ENCODE measurements at regions of chr5 and their contacts with region 1.

Region 1: GRCh38 chr5:128674825-128675446 is 136.9 kb upstream of the FBN2 start:
- DNase-seq: peak; percentile 67
- ATAC-seq: peak; percentile 58
- H3K4me3 Mint-ChIP-seq: no peak overlapping the region
- H3K27ac Mint-ChIP-seq: no peak overlapping the region
- H3K4me1 Mint-ChIP-seq: no peaks in the 10 kb centered on the region
- H3K27me3 Mint-ChIP-seq: peaks cover 9% of the 10 kb centered on the region

Region 2: DNA sequence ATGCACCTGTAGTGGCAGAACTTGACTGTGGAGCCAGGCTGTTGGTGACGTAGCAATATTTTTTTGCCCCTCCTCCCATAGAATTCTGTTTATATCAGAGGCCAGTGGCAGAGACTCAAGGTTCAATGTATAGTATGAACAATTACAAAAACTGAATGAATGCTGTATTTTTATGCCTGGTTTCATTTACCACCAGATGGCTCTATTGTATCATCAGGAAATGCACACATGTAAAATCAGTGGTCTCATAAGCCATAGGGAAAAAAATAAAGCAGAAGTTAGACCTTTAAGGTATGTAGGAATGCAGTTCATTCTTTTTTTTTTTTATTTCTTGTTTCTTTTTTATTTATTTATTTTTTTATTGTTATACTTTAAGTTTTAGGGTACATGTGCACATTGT is 928.2 kb before region 1 on chr5:
- CTCF ChIA-PET with region 1: no interaction called
- POLR2A ChIA-PET with region 1: no interaction called
- intact Hi-C with region 1: loop called in 1 of 2 experiments (anchors 10 kb)
- DNase-seq: no peak
- ATAC-seq: no peak
- H3K4me3 Mint-ChIP-seq: no peak overlapping the region
- H3K27ac Mint-ChIP-seq: no peak overlapping the region
- H3K4me1 Mint-ChIP-seq: no peaks in the 10 kb centered on the region
- H3K27me3 Mint-ChIP-seq: peaks cover 9% of the 10 kb centered on the region

Region 3: DNA sequence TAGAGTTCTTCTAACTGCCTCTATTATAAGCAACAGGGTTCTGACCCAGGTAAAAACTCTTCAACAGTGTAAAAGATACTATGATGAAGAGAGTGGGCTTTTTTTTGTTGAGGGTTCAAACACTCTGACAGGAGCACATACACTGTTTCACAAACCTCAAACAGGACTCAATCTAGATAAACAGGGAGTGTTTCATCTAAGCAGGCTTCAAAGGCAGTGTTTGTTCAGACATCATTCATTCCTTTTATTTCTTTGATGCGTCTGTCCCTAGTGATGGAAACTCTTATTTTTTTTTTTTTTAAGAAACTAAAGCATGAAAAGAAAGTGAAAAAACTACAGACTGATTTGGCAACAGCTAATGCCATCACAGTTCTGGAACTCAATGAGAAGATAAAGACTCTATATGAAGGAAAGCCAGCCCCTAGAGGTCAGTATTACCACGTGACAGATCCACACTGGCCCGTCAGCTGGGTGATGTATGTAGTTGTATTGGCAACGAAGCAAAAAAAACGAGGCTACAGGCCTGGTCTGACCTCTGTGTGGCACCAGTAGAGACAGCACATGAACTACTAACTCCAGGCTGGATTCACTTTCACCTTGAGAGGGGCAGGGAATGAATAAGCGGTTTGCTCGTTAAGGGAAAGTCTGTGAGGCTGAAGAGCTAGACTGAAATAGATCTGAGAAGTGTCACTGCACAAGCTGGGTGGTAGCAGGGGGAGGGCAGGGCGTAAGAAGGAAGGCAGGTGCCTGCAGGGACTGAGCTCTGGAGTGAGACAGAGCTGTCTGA is 799.5 kb before region 1 on chr5:
- CTCF ChIA-PET with region 1: no interaction called
- POLR2A ChIA-PET with region 1: no interaction called
- intact Hi-C with region 1: loop called in 1 of 2 experiments (anchors 10 kb)
- DNase-seq: peak; percentile 60
- ATAC-seq: peak; percentile 91
- H3K4me3 Mint-ChIP-seq: no peak overlapping the region
- H3K27ac Mint-ChIP-seq: no peak overlapping the region
- H3K4me1 Mint-ChIP-seq: no peaks in the 10 kb centered on the region
- H3K27me3 Mint-ChIP-seq: no peaks in the 10 kb centered on the region